PC-9 (cell line): ENCODE measurements at regions of chr6 and their contacts with region 1.

Region 1: GRCh38 chr6:111086685-111087084 is 618 bp upstream of the SLC16A10 start:
- DNase-seq: no peak
- H3K4me3 ChIP-seq: peak overlapping the region; percentile 70
- H3K27ac ChIP-seq: no peak overlapping the region
- H3K4me1 ChIP-seq: peaks cover 6% of the 10 kb centered on the region; the same call in 1 of the 2 replicates
- H3K27me3 ChIP-seq: peaks cover 5% of the 10 kb centered on the region; the same call in 1 of the 2 replicates
- CTCF ChIP-seq: no peak

Region 2: DNA sequence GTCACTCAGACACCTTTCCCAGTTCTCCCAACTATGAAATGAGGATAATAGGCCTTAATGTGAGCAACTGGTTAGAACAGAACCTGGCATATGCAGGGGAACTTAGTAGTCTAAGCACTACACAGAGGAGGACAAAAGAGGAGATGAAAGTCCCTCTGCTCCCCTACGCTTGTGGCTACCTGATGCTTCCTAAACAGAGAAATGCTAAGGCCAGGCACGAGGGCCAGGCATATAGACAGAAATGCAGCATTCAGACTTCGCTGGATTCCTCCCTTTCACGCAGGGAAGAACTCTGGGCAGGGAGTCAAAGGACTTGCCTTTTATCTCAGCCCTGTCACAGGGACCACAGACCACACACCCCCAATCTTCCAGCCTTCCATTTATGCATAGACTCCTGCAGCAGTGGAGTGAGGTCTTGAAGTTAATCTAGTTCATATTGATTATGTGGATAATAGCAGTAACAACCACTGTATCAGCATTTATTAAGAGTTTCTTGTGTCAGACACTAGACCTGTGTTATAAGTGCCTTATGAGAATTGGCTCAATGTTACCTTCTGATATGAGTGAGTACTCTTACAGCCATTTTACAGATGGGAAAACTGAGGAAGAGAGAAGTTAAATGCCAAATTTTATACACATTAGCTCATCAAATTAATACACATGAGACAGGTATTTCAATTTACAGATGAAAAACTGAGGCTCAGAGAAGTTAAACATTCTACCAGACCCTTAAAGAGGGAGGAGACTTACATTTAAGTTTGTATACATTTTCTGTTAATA is 546.0 kb after region 1 on chr6:
- CTCF ChIA-PET with region 1: interaction called, 15 read pairs
- POLR2A ChIA-PET with region 1: no interaction called
- intact Hi-C with region 1: no loop called
- DNase-seq: no peak
- H3K4me3 ChIP-seq: no peak overlapping the region
- H3K27ac ChIP-seq: no peak overlapping the region
- H3K4me1 ChIP-seq: 0 out of 2 replicates have a peak, but pooled peaks cover 4% of the 10 kb centered on the region
- H3K27me3 ChIP-seq: no peaks in the 10 kb centered on the region
- CTCF ChIP-seq: no peak